Esophagus squamous epithelium (tissue), 5 donors: ENCODE measurements at regions of chr17 and their contacts with region 1.

Region 1: GRCh38 chr17:74296548-74296936 is 22.5 kb downstream of the DNAI2 start:
- DNase-seq: no peak
- H3K4me3 ChIP-seq: no peak overlapping the region
- H3K27ac ChIP-seq: no peak overlapping the region
- H3K4me1 ChIP-seq: peaks cover 0 to 18% (median 0%) of the 10 kb centered on the region in 3 donors
- H3K27me3 ChIP-seq: peaks cover 0 to 35% (median 0%) of the 10 kb centered on the region in 4 donors
- CTCF ChIP-seq: peak in 5 of 6 experiments; percentile 26 to 43 (median 40)
- POLR2A ChIP-seq: no peak

Region 2: GRCh38 chr17:74118504-74118903 is 178.0 kb before region 1 on chr17:
- intact Hi-C with region 1: no loop called
- DNase-seq: no peak
- H3K4me3 ChIP-seq: no peak overlapping the region
- H3K27ac ChIP-seq: no peak overlapping the region
- H3K4me1 ChIP-seq: no peaks in the 10 kb centered on the region
- H3K27me3 ChIP-seq: peaks cover 0 to 84% (median 0%) of the 10 kb centered on the region in 4 donors
- CTCF ChIP-seq: no peak
- POLR2A ChIP-seq: no peak

Region 3: GRCh38 chr17:74212913-74213791 is 83.4 kb before region 1 on chr17 and contains the start of gene TTYH2:
- intact Hi-C with region 1: loop called (anchors 10 kb)
- DNase-seq: peak; percentile 47
- H3K4me3 ChIP-seq: peak within 1 kb of the TSS; percentile 37 to 65 (median 54)
- H3K27ac ChIP-seq: peak within 1 kb of the TSS; percentile 77 to 89 (median 86)
- H3K4me1 ChIP-seq: peaks cover 33 to 78% (median 41%) of the 10 kb centered on the region in 3 donors
- H3K27me3 ChIP-seq: peaks cover 0 to 14% (median 0%) of the 10 kb centered on the region in 4 donors
- CTCF ChIP-seq: peak in 2 of 6 experiments; percentile 35 to 55
- POLR2A ChIP-seq: peak in 1 of 4 donors; percentile 50
- total RNA-seq, gene TTYH2: 0.35 to 6.7 (median 1.8) TPM